ENCODE measurements at regions of chr18 and their contacts with region 1.

Region 1: DNA sequence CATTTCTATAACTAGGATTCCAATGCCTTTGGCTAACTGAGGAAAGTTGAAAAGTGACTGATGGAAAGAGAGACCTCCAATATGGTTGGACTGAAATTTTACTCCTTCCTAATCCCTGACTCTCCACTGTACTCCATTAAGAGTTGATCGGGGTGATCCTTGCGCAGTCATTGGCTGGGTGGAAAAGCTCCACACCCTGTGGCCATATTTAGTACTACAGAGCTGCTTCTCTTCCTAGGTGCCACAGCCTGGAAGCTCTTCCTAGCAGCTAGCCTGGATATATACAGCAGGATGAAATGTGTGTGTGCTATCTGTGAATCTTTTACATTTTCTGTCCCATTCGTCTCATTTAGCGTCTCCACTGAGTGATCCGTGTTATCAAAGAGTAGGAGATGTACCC is 71.2 kb downstream of the MEP1B start:
- DNase-seq: no peak
- ATAC-seq: no peak

Region 2: DNA sequence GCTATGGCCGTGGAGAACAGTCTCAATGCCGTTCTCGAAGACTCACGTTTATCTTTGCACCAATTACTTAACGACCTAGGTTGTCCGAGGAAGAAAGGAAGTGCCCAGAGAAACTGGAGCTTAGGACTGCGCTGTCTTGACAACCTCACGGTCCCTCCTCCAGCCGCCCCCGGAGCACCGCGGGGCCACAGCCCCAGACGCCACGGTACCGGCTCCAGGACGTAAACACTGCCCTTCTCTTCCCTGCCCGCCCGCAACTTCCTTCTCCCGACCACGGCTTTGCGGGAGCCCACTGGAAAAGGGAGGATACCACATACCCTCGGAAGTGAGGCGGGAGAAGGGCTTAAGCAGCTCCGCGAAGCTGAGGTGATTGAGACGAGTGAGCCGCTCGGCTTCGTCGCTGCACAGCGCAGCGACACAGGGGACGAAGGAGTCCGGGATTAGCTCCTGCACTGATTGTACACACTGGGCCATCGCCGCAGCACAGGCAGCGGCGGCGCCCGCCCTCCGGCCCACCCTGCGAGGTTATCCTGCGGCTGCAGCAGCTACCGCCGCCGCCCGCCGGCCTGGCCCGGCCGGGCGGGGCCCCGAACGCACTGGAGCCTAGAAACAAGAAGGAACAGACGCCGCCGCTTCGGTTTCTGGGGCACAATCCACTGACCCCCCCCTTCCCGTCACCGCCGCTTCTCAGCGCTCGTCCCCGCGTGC is 318.6 kb before region 1 on chr18:
- intact Hi-C with region 1: no loop called
- DNase-seq: peak; percentile 68
- ATAC-seq: peak; percentile 62

Region 3: GRCh38 chr18:32167975-32168730 is 92.8 kb before region 1 on chr18:
- intact Hi-C with region 1: loop called (anchors 10 kb)
- DNase-seq: no peak
- ATAC-seq: no peak